ENCODE measurements at regions of chr14 and their contacts with region 1.

Region 1: GRCh38 chr14:54364555-54365415 is 32.0 kb upstream of the CDKN3 start:
- DNase-seq: peak in 1 of 10 donors; percentile 56
- H3K4me3 ChIP-seq: peak overlapping the region in 2 of 59 donors; percentile 9 to 36
- H3K27ac ChIP-seq: peak overlapping the region in 3 of 59 donors; percentile 25 to 45 (median 28)
- H3K27me3 ChIP-seq: no peaks in the 10 kb centered on the region
- CTCF ChIP-seq: no peak

Region 2: DNA sequence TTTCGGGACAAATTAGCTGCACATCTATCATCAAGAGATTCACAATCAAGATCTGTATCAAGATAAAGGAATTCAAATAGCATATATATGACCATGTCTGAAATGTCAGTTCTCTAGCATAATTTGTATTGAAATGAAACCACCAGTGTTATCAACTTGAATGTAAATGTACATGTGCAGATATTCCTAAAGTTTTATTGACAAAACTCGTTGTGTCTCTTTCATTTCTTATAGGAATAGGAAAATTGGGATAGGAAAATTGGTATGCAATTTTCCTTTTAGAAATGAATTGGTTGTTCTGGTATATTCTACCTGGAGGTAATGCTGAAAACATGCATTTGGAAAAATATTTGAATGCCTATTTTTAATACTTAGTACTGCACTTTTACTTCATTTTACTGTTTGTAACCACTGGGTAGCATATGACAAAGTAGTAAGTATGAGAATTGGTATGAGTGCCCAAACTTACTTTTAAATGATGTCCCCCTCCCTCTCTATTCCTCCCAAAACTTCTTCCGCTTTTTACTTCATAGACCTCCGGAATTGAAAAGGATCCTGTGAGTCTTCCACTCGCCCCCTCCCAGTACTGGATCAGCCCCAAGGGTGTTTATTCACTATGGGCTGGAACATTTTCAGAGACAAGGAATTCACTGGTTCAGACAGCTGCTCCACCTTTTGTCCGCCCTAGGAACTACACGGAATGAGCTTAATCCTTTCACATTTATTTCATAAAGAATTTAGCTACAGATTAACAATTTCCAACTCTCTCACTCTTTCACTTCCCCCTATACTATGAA is 55.4 kb after region 1 on chr14:
- intact Hi-C with region 1: loop called in 1 of 2 experiments (anchors 1 kb)
- DNase-seq: peak in 1 of 10 donors; percentile 40
- H3K4me3 ChIP-seq: peak overlapping the region in 1 of 59 donors; percentile 7
- H3K27ac ChIP-seq: peak overlapping the region in 3 of 59 donors; percentile 22 to 33 (median 25)
- H3K27me3 ChIP-seq: no peaks in the 10 kb centered on the region
- CTCF ChIP-seq: peak; percentile 17 to 71 (median 56)

Measured in dorsolateral prefrontal cortex (tissue), 120 donors.